ENCODE measurements at regions of chr16 and their contacts with region 1.

Region 1: GRCh38 chr16:71883849-71884638 is at the start of gene ZNF821:
- DNase-seq: peak; percentile 64
- ATAC-seq: peak; percentile 91
- H3K4me3 ChIP-seq: peak within 1 kb of the TSS; percentile 52
- H3K27ac ChIP-seq: peak within 1 kb of the TSS; percentile 60
- H3K4me1 ChIP-seq: peaks cover 2% of the 10 kb centered on the region; the same call in 1 of the 2 replicates
- H3K27me3 ChIP-seq: no peaks in the 10 kb centered on the region
- CTCF ChIP-seq: no peak; the same call in none of the 2 replicates
- POLR2A ChIP-seq: 0 out of 2 replicates have a peak, but pooled peaks have one; percentile 14
- RAD21 ChIP-seq: no peak; the same call in 1 of the 2 replicates
- total RNA-seq, gene ZNF821: 4.4 and 5.9 TPM in 2 replicates

Region 2: GRCh38 chr16:71767060-71767900 is 116.8 kb before region 1 on chr16:
- CTCF ChIA-PET with region 1: no interaction called
- POLR2A ChIA-PET with region 1: no interaction called
- dilution Hi-C with region 1: no loop called
- in situ Hi-C with region 1: no loop called
- intact Hi-C with region 1: loop called (anchors 5 kb)
- DNase-seq: no peak
- ATAC-seq: no peak
- H3K4me3 ChIP-seq: no peak overlapping the region
- H3K27ac ChIP-seq: no peak overlapping the region; the same call in 1 of the 2 replicates
- H3K4me1 ChIP-seq: no peaks in the 10 kb centered on the region; the same call in 1 of the 2 replicates
- H3K27me3 ChIP-seq: no peaks in the 10 kb centered on the region
- CTCF ChIP-seq: no peak
- POLR2A ChIP-seq: no peak
- RAD21 ChIP-seq: no peak

Region 3: DNA sequence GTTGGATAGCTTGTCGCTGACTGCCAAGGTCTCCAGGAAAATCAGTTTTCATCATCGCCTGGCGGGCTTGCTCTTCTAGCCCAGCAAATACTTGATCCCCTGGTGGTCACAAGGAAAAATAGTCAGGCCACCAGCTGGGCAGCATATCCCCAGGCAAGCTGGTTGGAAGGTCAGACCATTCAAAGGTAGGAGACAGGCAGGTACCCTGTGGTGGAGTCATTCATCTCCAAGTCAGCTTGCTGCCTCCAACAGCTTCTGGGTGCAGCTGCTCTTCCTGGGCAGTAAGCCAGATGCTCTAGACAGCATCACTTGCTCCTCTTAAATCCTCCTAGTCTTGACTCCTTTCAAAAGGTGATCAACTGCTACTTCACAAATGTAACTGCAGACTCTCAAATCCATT is 16.1 kb before region 1 on chr16:
- CTCF ChIA-PET with region 1: interaction called, 10 read pairs
- POLR2A ChIA-PET with region 1: no interaction called
- dilution Hi-C with region 1: no loop called
- in situ Hi-C with region 1: no loop called
- intact Hi-C with region 1: no loop called
- DNase-seq: no peak
- ATAC-seq: no peak
- H3K4me3 ChIP-seq: no peak overlapping the region
- H3K27ac ChIP-seq: no peak overlapping the region
- H3K4me1 ChIP-seq: no peaks in the 10 kb centered on the region
- H3K27me3 ChIP-seq: no peaks in the 10 kb centered on the region
- CTCF ChIP-seq: no peak
- POLR2A ChIP-seq: no peak
- RAD21 ChIP-seq: no peak

Region 4: GRCh38 chr16:71894921-71895678 is 11.1 kb after region 1 on chr16 and contains the start of gene IST1:
- CTCF ChIA-PET with region 1: no interaction called
- POLR2A ChIA-PET with region 1: no interaction called
- dilution Hi-C with region 1: no loop called
- in situ Hi-C with region 1: no loop called
- intact Hi-C with region 1: loop called (anchors 1 kb)
- DNase-seq: peak; percentile 99
- ATAC-seq: peak; percentile 96
- H3K4me3 ChIP-seq: peak within 1 kb of the TSS; percentile 80
- H3K27ac ChIP-seq: peak within 1 kb of the TSS; percentile 97
- H3K4me1 ChIP-seq: peaks cover 2% of the 10 kb centered on the region
- H3K27me3 ChIP-seq: no peaks in the 10 kb centered on the region
- CTCF ChIP-seq: no peak
- POLR2A ChIP-seq: peak; percentile 92
- RAD21 ChIP-seq: no peak
- total RNA-seq, gene IST1: 175 and 186 TPM in 2 replicates

Region 5: GRCh38 chr16:71961066-71962039 is 77.3 kb after region 1 on chr16:
- CTCF ChIA-PET with region 1: interaction called, 19 read pairs
- POLR2A ChIA-PET with region 1: no interaction called
- dilution Hi-C with region 1: no loop called
- in situ Hi-C with region 1: no loop called
- intact Hi-C with region 1: loop called (anchors 1 kb)
- DNase-seq: peak; percentile 83
- ATAC-seq: peak; percentile 99
- H3K4me3 ChIP-seq: no peak overlapping the region
- H3K27ac ChIP-seq: no peak overlapping the region
- H3K4me1 ChIP-seq: no peaks in the 10 kb centered on the region
- H3K27me3 ChIP-seq: no peaks in the 10 kb centered on the region; the same call in 1 of the 2 replicates
- CTCF ChIP-seq: peak; percentile 85
- POLR2A ChIP-seq: no peak
- RAD21 ChIP-seq: peak; percentile 83

Region 6: DNA sequence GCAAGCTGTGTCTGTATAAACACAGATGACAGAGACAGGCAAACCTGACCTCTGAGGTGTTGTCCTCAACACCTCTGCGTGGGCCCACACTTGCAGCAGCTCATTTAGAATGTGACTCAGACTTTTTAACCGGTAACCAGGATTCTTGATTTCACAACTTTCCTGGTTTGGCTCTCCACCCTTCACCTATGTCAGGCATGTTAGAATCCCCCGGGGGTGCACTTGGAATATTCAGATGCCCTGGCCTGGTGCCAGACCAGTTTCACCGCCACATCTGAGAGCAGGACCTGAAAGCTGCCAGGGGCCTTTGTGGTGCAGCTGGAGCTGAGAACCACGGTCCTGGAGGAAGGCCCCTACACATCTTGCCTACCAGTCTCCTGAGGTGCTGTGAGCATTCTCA is 129.3 kb after region 1 on chr16:
- CTCF ChIA-PET with region 1: no interaction called
- POLR2A ChIA-PET with region 1: no interaction called
- dilution Hi-C with region 1: no loop called
- in situ Hi-C with region 1: no loop called
- intact Hi-C with region 1: no loop called
- DNase-seq: peak; percentile 5
- ATAC-seq: no peak
- H3K4me3 ChIP-seq: no peak overlapping the region
- H3K27ac ChIP-seq: no peak overlapping the region
- H3K4me1 ChIP-seq: no peaks in the 10 kb centered on the region
- H3K27me3 ChIP-seq: no peaks in the 10 kb centered on the region
- CTCF ChIP-seq: no peak
- POLR2A ChIP-seq: no peak
- RAD21 ChIP-seq: no peak